Ascending aorta (tissue), 2 donors: ENCODE measurements at regions of chr9 and their contacts with region 1.

Region 1: DNA sequence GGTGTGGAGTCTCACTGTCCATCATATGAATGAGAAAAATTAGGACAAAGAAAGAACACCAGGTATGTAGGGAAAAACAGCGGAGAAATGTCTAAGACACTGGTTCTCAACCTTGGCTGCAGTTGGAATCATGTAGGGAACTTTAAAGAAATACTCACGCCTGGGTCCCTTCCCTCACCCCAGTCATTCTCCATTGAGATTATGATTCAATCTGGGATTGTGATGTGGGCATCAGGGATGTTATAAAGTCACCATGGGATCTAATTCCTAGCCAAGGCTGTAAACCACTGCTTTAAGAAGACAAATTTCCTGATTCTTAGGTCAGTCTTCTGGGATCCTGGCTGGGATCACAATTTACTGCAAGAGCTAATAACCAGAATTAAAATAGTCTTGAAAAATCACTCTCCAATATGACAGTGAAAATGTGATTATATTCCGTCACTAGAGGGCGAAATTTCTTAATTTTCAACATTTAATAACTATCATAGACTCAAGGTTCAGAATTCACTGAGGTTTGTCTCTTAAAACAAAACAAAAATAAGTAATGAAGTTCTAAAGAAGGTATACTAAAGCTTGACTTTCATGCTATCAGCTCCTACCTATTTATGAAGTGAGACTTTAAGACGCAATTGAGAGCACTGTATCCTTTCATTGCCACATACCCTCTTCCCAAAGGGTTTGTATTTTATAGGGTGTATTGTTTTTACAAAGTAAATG is 60.5 kb downstream of the GLDC start:
- DNase-seq: no peak
- H3K4me3 ChIP-seq: no peak overlapping the region
- H3K27ac ChIP-seq: no peak overlapping the region
- H3K4me1 ChIP-seq: no peaks in the 10 kb centered on the region
- H3K27me3 ChIP-seq: no peaks in the 10 kb centered on the region
- CTCF ChIP-seq: peak; percentile 11 to 51 (median 32)

Region 2: DNA sequence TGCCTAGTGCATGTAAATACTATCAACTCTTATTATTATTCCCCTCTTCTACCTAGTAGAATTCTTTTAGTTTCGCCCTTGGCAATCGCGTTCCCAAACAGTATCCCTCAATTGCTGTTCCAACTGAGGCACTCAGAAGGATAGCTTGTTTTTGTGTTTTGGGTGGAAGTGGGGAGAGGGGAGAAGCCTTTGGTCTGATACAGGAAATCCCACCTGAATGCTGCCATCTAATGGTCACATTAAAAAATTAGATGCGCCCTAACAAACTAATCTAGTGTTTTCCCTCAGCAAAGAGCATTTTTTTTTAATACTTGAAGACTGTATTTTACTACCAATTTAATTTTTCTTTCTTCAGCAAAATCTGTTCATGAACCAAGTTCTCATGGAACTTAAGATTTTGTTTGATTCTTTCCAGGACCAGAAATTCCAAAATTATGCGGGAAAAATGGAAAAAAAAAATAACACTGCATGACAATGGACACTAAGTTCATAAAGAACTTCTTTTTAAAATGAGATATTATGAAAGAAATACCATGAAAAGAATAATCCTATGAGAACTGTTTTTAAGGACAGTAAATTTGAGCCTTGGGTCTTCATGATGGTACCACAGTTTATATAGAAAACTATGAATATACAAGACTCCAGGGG is 82.7 kb after region 1 on chr9:
- intact Hi-C with region 1: loop called (anchors 5 kb)
- DNase-seq: no peak
- H3K4me3 ChIP-seq: no peak overlapping the region
- H3K27ac ChIP-seq: no peak overlapping the region
- H3K4me1 ChIP-seq: no peaks in the 10 kb centered on the region
- H3K27me3 ChIP-seq: no peaks in the 10 kb centered on the region
- CTCF ChIP-seq: peak in 2 of 3 experiments; percentile 21 to 49

Region 3: DNA sequence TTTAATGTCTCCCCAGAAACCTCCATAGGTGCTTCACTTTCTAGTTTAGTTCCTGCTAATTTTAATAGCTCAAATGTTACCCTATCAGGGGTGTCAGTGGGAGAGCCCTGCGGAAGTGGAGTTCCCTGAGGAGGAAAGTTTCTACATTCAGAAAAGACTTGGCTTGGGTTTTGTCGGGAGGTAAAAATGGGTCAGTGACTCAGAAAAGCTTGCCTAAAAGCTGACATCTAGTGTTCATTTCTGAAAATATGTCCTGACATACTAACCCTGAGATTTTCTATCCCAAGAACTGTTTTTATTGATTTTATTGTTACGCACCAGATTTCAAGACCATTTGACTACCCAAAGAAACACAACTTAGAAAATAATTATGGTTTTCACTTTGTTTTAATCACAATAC is 101.4 kb after region 1 on chr9:
- intact Hi-C with region 1: loop called (anchors 5 kb)
- DNase-seq: no peak
- H3K4me3 ChIP-seq: no peak overlapping the region
- H3K27ac ChIP-seq: peak overlapping the region; percentile 4 to 62
- H3K4me1 ChIP-seq: peaks cover 0 to 10% of the 10 kb centered on the region in 2 donors
- H3K27me3 ChIP-seq: no peaks in the 10 kb centered on the region
- CTCF ChIP-seq: peak in 2 of 3 experiments; percentile 24 to 43